Mammary epithelial cell (primary cell): ENCODE measurements at regions of chr13 and their contacts with region 1.

Region 1: DNA sequence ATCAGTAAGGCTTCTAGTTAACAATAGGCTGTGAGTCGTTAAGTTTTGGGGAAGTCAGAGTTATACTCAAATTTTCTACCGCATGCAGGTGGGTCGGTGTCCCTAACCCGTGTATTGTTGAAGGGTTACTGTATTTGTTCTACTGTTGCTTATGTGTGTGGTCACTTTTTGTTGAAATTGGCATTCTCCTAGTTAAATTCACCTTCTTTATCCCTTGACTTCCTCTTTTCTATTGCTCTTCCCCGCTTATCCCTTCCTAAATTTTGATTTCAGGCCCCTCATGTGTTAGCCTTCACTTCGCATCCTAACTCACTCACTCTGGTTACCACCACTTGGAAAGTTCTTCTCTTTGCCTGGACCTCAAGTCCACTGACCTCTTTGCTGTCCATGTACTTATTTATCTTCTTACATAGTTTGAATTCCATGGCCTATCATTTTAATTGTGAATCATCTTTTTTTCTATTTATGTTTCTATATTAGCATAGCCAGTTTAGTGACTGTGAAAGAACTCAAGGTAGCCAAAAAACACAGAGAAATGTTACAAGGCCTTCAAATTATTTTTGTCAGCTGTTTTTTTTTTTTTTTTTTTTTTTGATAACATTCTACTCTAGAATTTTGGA is 52.9 kb downstream of the NDFIP2 start:
- DNase-seq: no peak
- H3K4me3 ChIP-seq: no peak overlapping the region
- H3K27ac ChIP-seq: no peak overlapping the region
- H3K4me1 ChIP-seq: no peaks in the 10 kb centered on the region
- H3K27me3 ChIP-seq: no peaks in the 10 kb centered on the region
- CTCF ChIP-seq: no peak

Region 2: DNA sequence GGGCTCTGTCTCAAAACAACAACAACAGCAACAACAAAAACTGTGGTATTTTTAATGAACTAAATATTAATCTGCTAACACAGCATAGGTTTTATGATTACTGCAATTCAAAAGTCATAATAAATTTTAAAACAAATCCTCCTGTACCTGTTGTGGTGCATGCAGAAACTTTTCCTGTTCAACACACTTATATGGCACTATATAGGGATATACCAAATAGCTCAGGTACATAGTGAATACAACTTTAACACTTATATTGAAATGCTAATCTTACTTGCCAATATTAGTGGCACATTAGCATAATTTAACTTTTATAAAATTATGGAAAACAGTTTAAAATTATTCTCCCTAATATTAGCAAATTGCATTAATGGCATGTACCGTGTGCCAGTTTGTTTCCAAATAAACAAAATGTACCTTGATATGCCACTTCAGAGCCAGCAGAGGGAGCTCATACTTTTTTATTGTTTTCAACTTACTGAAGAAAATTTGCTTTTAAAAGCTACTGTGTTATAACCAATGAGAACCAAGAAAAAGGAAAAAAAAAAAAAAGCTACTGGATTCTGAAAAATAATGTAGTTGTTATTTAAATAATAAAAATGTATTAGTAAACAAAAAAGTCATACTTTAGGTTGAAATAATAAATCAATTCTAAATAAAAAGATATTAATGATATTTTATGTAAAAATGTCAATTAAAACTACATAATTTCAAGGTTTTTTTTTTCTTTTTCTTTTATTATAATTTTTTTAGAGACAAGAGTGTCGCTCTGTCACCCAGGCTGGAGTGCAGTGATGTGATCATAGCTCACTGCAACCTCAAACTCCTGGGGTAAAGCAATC is 109.9 kb before region 1 on chr13:
- CTCF ChIA-PET with region 1: no interaction called
- dilution Hi-C with region 1: loop called (anchors 5 kb)
- in situ Hi-C with region 1: loop called in 1 of 2 experiments (anchors 5 kb)
- intact Hi-C with region 1: no loop called
- DNase-seq: no peak
- H3K4me3 ChIP-seq: no peak overlapping the region
- H3K27ac ChIP-seq: no peak overlapping the region
- H3K4me1 ChIP-seq: no peaks in the 10 kb centered on the region
- H3K27me3 ChIP-seq: no peaks in the 10 kb centered on the region
- CTCF ChIP-seq: peak; percentile 59 to 67

Region 3: DNA sequence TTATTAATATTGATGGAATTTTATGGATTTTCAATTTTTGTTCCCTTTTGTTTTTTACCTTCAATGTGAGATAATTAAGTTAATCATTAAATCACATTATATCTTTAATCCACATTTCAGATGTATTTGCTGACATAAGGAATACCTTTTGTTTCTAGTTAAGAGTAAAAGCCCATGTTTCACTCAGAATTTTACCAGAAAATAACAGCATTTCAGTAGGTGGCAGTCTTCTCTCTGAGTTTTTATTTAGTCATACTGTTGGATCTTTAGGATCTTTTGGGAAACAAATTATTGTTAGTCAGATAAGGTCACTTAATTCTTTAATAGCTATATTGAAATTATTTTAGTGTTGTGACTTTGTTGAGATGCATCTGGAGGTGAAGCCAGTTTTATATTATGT is 15.0 kb after region 1 on chr13:
- CTCF ChIA-PET with region 1: no interaction called
- dilution Hi-C with region 1: no loop called
- in situ Hi-C with region 1: no loop called
- intact Hi-C with region 1: no loop called
- DNase-seq: peak; percentile 23
- H3K4me3 ChIP-seq: no peak overlapping the region
- H3K27ac ChIP-seq: peak overlapping the region; percentile 3
- H3K4me1 ChIP-seq: peaks cover 5% of the 10 kb centered on the region
- H3K27me3 ChIP-seq: no peaks in the 10 kb centered on the region
- CTCF ChIP-seq: peak; percentile 48 to 55